CD8-positive, alpha-beta T cell (primary cell): ENCODE measurements at regions of chr6 and their contacts with region 1.

Region 1: GRCh38 chr6:111918825-111919224 is 45.6 kb upstream of the FYN start:
- DNase-seq: no peak
- ATAC-seq: no peak
- H3K4me3 ChIP-seq: no peak overlapping the region
- H3K4me3 Mint-ChIP-seq: no peak overlapping the region
- H3K27ac ChIP-seq: no peak overlapping the region
- H3K27ac Mint-ChIP-seq: no peak overlapping the region
- H3K4me1 ChIP-seq: no peaks in the 10 kb centered on the region
- H3K4me1 Mint-ChIP-seq: no peaks in the 10 kb centered on the region
- H3K27me3 ChIP-seq: no peaks in the 10 kb centered on the region
- H3K27me3 Mint-ChIP-seq: no peaks in the 10 kb centered on the region
- CTCF ChIP-seq: no peak

Region 2: GRCh38 chr6:111494951-111495635 is 423.7 kb before region 1 on chr6:
- CTCF ChIA-PET with region 1: no interaction called
- POLR2A ChIA-PET with region 1: no interaction called
- intact Hi-C with region 1: loop called in 1 of 2 experiments (anchors 5 kb)
- DNase-seq: no peak
- ATAC-seq: no peak
- H3K4me3 ChIP-seq: no peak overlapping the region
- H3K4me3 Mint-ChIP-seq: no peak overlapping the region
- H3K27ac ChIP-seq: no peak overlapping the region
- H3K27ac Mint-ChIP-seq: no peak overlapping the region
- H3K4me1 ChIP-seq: no peaks in the 10 kb centered on the region
- H3K4me1 Mint-ChIP-seq: peaks cover 13% of the 10 kb centered on the region
- H3K27me3 ChIP-seq: no peaks in the 10 kb centered on the region
- H3K27me3 Mint-ChIP-seq: no peaks in the 10 kb centered on the region
- CTCF ChIP-seq: no peak

Region 3: GRCh38 chr6:111957623-111958315 is 38.9 kb after region 1 on chr6:
- CTCF ChIA-PET with region 1: no interaction called
- POLR2A ChIA-PET with region 1: interaction called, 3 read pairs
- intact Hi-C with region 1: loop called in 1 of 2 experiments (anchors 5 kb)
- DNase-seq: peak in 1 of 9 experiments; percentile 3
- ATAC-seq: no peak
- H3K4me3 ChIP-seq: no peak overlapping the region
- H3K4me3 Mint-ChIP-seq: no peak overlapping the region
- H3K27ac ChIP-seq: no peak overlapping the region
- H3K27ac Mint-ChIP-seq: no peak overlapping the region
- H3K4me1 ChIP-seq: no peaks in the 10 kb centered on the region
- H3K4me1 Mint-ChIP-seq: no peaks in the 10 kb centered on the region
- H3K27me3 ChIP-seq: no peaks in the 10 kb centered on the region
- H3K27me3 Mint-ChIP-seq: no peaks in the 10 kb centered on the region
- CTCF ChIP-seq: no peak